Endothelial cell of umbilical vein (primary cell): ENCODE measurements at regions of chr2 and their contacts with region 1.

Region 1: DNA sequence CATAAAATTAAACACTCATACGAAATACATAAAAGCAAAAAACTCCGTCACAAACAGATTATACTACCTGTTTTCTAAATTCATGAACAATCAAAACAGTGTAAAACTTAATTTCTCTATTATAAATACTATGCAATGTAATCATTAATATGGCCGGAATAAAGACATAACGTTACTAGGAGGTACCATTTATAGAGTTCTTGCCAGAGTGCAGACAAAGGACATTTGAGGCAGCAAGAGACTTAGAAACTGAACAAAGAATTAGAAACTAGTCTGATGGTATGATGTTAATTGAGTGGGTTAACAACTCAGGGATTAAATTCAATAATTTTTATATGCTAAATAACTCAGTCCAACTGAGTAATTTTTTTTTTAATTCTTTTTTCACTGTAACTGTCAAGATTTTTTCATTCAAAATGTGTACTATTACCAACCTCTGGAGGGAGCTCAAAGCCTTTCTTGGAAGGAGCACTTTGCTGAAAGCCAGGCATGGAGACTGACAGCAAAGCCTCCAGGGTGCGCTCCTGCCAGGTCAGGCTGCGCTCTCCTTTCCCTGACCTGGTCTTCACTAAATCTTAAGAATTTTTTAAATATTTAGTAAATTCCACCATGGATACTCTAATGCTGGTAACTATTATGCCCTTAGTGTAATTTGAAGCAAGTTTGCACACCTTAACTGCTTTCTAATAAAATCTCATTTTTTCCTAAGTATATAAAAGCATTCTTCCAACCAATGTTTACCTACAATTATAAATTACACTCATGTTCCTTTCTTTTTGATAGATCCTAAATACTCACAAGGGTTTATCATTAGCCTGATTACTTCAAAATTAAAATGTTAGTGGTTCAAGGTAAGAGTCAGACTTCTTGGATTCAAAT is 34.1 kb downstream of the WDR35 start:
- DNase-seq: peak; percentile 80
- H3K4me3 ChIP-seq: no peak overlapping the region
- H3K27ac ChIP-seq: no peak overlapping the region
- H3K4me1 ChIP-seq: no peaks in the 10 kb centered on the region
- H3K27me3 ChIP-seq: no peaks in the 10 kb centered on the region
- CTCF ChIP-seq: peak; percentile 80 to 85
- POLR2A ChIP-seq: no peak

Region 2: GRCh38 chr2:19786408-19787058 is 169.2 kb before region 1 on chr2:
- CTCF ChIA-PET with region 1: no interaction called
- POLR2A ChIA-PET with region 1: no interaction called
- dilution Hi-C with region 1: no loop called
- intact Hi-C with region 1: no loop called
- DNase-seq: no peak
- H3K4me3 ChIP-seq: no peak overlapping the region
- H3K27ac ChIP-seq: no peak overlapping the region
- H3K4me1 ChIP-seq: no peaks in the 10 kb centered on the region
- H3K27me3 ChIP-seq: peaks cover 0 to 2% of the 10 kb centered on the region in 2 experiments
- CTCF ChIP-seq: no peak
- POLR2A ChIP-seq: no peak

Region 3: GRCh38 chr2:19944205-19944845 is 11.5 kb before region 1 on chr2:
- CTCF ChIA-PET with region 1: interaction called, 16 read pairs
- POLR2A ChIA-PET with region 1: no interaction called
- dilution Hi-C with region 1: no loop called
- intact Hi-C with region 1: no loop called
- DNase-seq: no peak
- H3K4me3 ChIP-seq: no peak overlapping the region
- H3K27ac ChIP-seq: no peak overlapping the region
- H3K4me1 ChIP-seq: no peaks in the 10 kb centered on the region
- H3K27me3 ChIP-seq: no peaks in the 10 kb centered on the region
- CTCF ChIP-seq: no peak
- POLR2A ChIP-seq: no peak

Region 4: GRCh38 chr2:20051532-20052228 is 95.9 kb after region 1 on chr2 and contains the start of gene LAPTM4A:
- CTCF ChIA-PET with region 1: interaction called, 17 read pairs
- POLR2A ChIA-PET with region 1: no interaction called
- dilution Hi-C with region 1: no loop called
- intact Hi-C with region 1: loop called (anchors 1 kb)
- DNase-seq: peak; percentile 100
- H3K4me3 ChIP-seq: peak within 1 kb of the TSS; percentile 51 to 97 (median 83)
- H3K27ac ChIP-seq: peak within 1 kb of the TSS; percentile 94
- H3K4me1 ChIP-seq: peaks cover 34% of the 10 kb centered on the region
- H3K27me3 ChIP-seq: peaks cover 10% of the 10 kb centered on the region in 2 experiments
- CTCF ChIP-seq: no peak
- POLR2A ChIP-seq: peak; percentile 38
- total RNA-seq, gene LAPTM4A: 154 and 155 TPM in 2 replicates

Region 5: GRCh38 chr2:20097879-20098714 is 142.3 kb after region 1 on chr2:
- CTCF ChIA-PET with region 1: interaction called, 91 read pairs
- POLR2A ChIA-PET with region 1: no interaction called
- dilution Hi-C with region 1: no loop called
- intact Hi-C with region 1: loop called (anchors 1 kb)
- DNase-seq: peak; percentile 94
- H3K4me3 ChIP-seq: no peak overlapping the region
- H3K27ac ChIP-seq: no peak overlapping the region
- H3K4me1 ChIP-seq: peaks cover 4% of the 10 kb centered on the region
- H3K27me3 ChIP-seq: no peaks in the 10 kb centered on the region
- CTCF ChIP-seq: peak; percentile 86 to 93
- POLR2A ChIP-seq: no peak

Region 6: DNA sequence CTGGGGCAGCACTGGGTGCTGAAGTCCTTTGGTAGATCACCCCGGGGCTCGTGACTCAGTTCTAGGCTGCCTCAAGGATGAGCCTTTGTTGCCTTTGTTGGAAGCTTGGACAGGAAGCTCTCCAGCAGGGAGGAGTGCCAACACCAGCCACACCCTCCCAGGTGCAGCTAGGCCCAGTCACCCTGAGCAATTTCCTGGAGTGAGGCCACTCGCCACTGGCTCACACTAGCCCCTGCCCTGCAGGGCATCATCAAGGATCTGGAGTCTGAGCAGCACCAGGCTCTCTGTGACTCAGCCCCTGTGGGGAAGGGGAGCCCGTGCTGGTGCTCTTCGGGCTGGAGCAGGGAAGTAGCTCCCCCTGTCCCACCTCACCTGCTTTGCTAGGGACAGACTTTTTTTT is 275.8 kb after region 1 on chr2:
- CTCF ChIA-PET with region 1: no interaction called
- POLR2A ChIA-PET with region 1: no interaction called
- dilution Hi-C with region 1: no loop called
- intact Hi-C with region 1: no loop called
- DNase-seq: peak; percentile 22
- H3K4me3 ChIP-seq: no peak overlapping the region
- H3K27ac ChIP-seq: no peak overlapping the region
- H3K4me1 ChIP-seq: peaks cover 4% of the 10 kb centered on the region
- H3K27me3 ChIP-seq: peaks cover 0 to 2% of the 10 kb centered on the region in 2 experiments
- CTCF ChIP-seq: no peak
- POLR2A ChIP-seq: no peak

Region 7: GRCh38 chr2:20291106-20291564 is 335.4 kb after region 1 on chr2:
- CTCF ChIA-PET with region 1: interaction called, 12 read pairs
- POLR2A ChIA-PET with region 1: no interaction called
- dilution Hi-C with region 1: no loop called
- intact Hi-C with region 1: loop called (anchors 5 kb)
- DNase-seq: peak; percentile 83
- H3K4me3 ChIP-seq: no peak overlapping the region
- H3K27ac ChIP-seq: no peak overlapping the region
- H3K4me1 ChIP-seq: peaks cover 14% of the 10 kb centered on the region
- H3K27me3 ChIP-seq: no peaks in the 10 kb centered on the region
- CTCF ChIP-seq: peak; percentile 67 to 72
- POLR2A ChIP-seq: no peak